Kidney (tissue), 22 donors: ENCODE measurements at regions of chr10 and their contacts with region 1.

Region 1: DNA sequence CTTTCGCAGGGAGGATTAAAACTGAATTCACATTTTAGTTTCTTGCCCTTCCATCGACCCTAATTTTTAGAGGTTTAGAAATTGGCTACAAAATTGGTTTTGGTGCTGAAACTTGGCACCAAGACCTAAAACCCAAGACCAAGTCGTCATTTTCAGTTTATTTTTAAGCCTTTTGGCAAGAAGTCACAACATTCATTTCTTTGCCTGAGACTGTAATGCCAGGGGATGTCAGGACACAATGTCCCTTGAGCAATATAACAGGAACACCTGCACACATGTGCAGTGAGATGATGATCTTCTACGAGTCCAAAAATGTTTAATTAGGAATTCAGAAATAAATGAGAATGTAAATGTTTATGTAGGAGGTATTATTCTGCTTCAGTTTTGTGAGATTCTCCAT is 335.4 kb upstream of the ANKRD30A start:
- DNase-seq: no peak
- H3K4me3 ChIP-seq: no peak overlapping the region
- H3K27ac ChIP-seq: no peak overlapping the region
- H3K4me1 ChIP-seq: no peaks in the 10 kb centered on the region
- H3K27me3 ChIP-seq: no peaks in the 10 kb centered on the region
- CTCF ChIP-seq: no peak

Region 2: GRCh38 chr10:35626971-35627507 is 1162.9 kb before region 1 on chr10:
- intact Hi-C with region 1: loop called (anchors 10 kb)
- DNase-seq: no peak
- H3K4me3 ChIP-seq: no peak overlapping the region
- H3K27ac ChIP-seq: no peak overlapping the region
- H3K4me1 ChIP-seq: no peaks in the 10 kb centered on the region
- H3K27me3 ChIP-seq: no peaks in the 10 kb centered on the region
- CTCF ChIP-seq: no peak

Region 3: GRCh38 chr10:36888929-36889573 is 99.1 kb after region 1 on chr10:
- intact Hi-C with region 1: no loop called
- DNase-seq: peak in 4 of 5 donors; percentile 70 to 81 (median 78)
- H3K4me3 ChIP-seq: no peak overlapping the region
- H3K27ac ChIP-seq: no peak overlapping the region
- H3K4me1 ChIP-seq: peaks cover 0 to 2% (median 0%) of the 10 kb centered on the region in 3 donors
- H3K27me3 ChIP-seq: no peaks in the 10 kb centered on the region
- CTCF ChIP-seq: no peak